MCF 10A (cell line): ENCODE measurements at regions of chr7 and their contacts with region 1.

Region 1: DNA sequence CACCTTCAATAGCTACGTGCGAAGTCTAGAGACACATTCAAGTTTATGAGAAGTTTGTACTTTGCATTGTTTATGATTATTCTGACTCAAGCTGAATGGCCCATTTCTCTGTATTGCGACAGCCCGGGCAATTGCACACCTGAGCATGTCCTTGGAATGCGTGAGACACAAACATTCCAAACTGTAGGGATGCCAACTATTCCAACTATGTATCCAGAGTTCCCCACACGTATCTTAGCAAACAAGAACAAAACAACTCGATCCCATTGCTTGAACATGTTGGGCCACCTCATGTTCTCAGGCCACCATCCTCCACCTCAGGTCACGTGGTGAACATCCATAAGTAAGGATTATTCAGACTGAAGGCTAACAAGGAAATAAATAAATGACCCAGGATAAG is 51.4 kb upstream of the EGFR start:
- DNase-seq: peak; percentile 93
- H3K4me3 Mint-ChIP-seq: peak overlapping the region; percentile 35
- H3K27ac Mint-ChIP-seq: peak overlapping the region; percentile 99
- H3K4me1 Mint-ChIP-seq: peaks cover 48% of the 10 kb centered on the region
- H3K27me3 Mint-ChIP-seq: no peaks in the 10 kb centered on the region
- CTCF ChIP-seq: no peak

Region 2: GRCh38 chr7:54788664-54789063 is 178.7 kb before region 1 on chr7:
- CTCF ChIA-PET with region 1: no interaction called
- POLR2A ChIA-PET with region 1: no interaction called
- intact Hi-C with region 1: loop called (anchors 1 kb)
- DNase-seq: peak; percentile 65
- H3K4me3 Mint-ChIP-seq: no peak overlapping the region
- H3K27ac Mint-ChIP-seq: peak overlapping the region; percentile 49
- H3K4me1 Mint-ChIP-seq: peaks cover 6% of the 10 kb centered on the region
- H3K27me3 Mint-ChIP-seq: no peaks in the 10 kb centered on the region
- CTCF ChIP-seq: peak; percentile 54

Region 3: DNA sequence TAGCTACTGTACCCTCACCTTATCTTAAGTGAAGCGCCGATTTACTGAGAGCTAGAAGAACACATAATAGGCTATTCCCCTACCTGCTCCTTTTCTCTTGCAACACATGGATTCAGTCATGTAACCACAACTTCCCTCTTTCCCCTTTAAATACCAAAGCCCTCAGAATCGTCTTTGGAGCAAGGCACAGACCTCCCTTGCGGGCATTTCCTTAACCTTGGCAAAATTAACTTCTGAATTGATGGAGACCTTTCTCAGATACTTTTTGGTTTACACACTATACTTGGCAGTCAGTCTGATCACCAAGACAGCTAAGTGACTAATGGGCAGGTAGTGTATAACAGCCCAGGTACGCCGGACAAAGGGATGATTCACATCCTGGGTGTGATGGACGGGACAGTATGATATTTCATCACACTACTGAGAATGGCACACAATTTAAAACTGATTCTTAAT is 135.7 kb before region 1 on chr7:
- CTCF ChIA-PET with region 1: no interaction called
- POLR2A ChIA-PET with region 1: interaction called, 16 read pairs
- intact Hi-C with region 1: no loop called
- DNase-seq: peak; percentile 96
- H3K4me3 Mint-ChIP-seq: peak overlapping the region; percentile 28
- H3K27ac Mint-ChIP-seq: peak overlapping the region; percentile 61
- H3K4me1 Mint-ChIP-seq: peaks cover 21% of the 10 kb centered on the region
- H3K27me3 Mint-ChIP-seq: no peaks in the 10 kb centered on the region
- CTCF ChIP-seq: no peak

Region 4: GRCh38 chr7:54839538-54840213 is 127.7 kb before region 1 on chr7:
- CTCF ChIA-PET with region 1: no interaction called
- POLR2A ChIA-PET with region 1: interaction called, 3 read pairs
- intact Hi-C with region 1: loop called (anchors 2 kb)
- DNase-seq: peak; percentile 81
- H3K4me3 Mint-ChIP-seq: no peak overlapping the region
- H3K27ac Mint-ChIP-seq: no peak overlapping the region
- H3K4me1 Mint-ChIP-seq: peaks cover 29% of the 10 kb centered on the region
- H3K27me3 Mint-ChIP-seq: no peaks in the 10 kb centered on the region
- CTCF ChIP-seq: peak; percentile 80

Region 5: GRCh38 chr7:54944179-54944578 is 23.2 kb before region 1 on chr7:
- CTCF ChIA-PET with region 1: interaction called, 3 read pairs
- POLR2A ChIA-PET with region 1: interaction called, 63 read pairs
- intact Hi-C with region 1: no loop called
- DNase-seq: peak; percentile 21
- H3K4me3 Mint-ChIP-seq: no peak overlapping the region
- H3K27ac Mint-ChIP-seq: peak overlapping the region; percentile 4
- H3K4me1 Mint-ChIP-seq: peaks cover 24% of the 10 kb centered on the region
- H3K27me3 Mint-ChIP-seq: no peaks in the 10 kb centered on the region
- CTCF ChIP-seq: no peak

Region 6: DNA sequence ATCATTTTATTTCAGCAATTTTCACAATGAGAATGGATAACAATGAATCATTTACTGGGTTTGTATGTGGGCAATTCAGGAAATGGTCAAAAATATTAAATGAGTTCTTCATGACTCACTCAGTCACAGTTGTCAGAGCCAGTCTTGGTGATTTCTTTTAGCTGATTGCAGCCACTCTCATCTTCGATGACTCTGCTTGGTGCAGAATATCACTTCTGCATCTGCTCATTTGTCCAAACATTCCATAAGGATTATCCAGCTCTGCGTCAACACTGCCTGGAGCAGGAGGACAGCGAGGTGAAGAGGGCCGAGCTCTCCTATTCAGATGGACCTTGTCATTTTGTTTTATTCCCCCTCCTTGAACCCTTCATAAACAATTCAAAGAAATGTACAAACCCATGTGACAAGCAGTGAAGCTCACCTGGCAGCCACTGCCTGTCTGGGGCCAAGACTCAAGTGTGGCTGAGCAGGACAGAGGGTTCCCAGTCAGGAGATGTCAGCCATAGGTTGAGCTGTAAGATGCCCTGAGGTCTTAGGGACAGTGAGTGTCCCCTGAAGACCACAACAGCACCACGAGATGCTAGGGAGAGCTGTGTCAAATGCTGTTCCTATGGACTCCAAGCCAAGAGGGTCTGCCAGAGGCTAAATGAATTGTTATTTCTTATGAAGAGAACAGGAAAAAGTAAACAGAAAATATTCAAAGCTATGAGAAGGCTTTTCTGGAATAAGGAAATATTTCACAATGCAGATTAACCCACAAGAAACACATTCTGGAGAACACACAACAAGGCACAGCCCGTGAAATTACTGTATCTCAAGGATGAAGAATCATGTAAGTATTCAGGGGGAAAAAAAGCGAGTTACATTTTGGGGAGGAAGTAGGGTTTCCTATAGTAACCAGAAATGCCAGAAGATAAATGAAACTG is 18.3 kb after region 1 on chr7:
- CTCF ChIA-PET with region 1: interaction called, 3 read pairs
- POLR2A ChIA-PET with region 1: interaction called, 24 read pairs
- intact Hi-C with region 1: no loop called
- DNase-seq: peak; percentile 81
- H3K4me3 Mint-ChIP-seq: peak overlapping the region; percentile 51
- H3K27ac Mint-ChIP-seq: peak overlapping the region; percentile 97
- H3K4me1 Mint-ChIP-seq: peaks cover 16% of the 10 kb centered on the region
- H3K27me3 Mint-ChIP-seq: no peaks in the 10 kb centered on the region
- CTCF ChIP-seq: no peak

Region 7: GRCh38 chr7:55048221-55048859 is 81.0 kb after region 1 on chr7:
- CTCF ChIA-PET with region 1: no interaction called
- POLR2A ChIA-PET with region 1: no interaction called
- intact Hi-C with region 1: no loop called
- DNase-seq: peak; percentile 86
- H3K4me3 Mint-ChIP-seq: no peak overlapping the region
- H3K27ac Mint-ChIP-seq: peak overlapping the region; percentile 49
- H3K4me1 Mint-ChIP-seq: peaks cover 66% of the 10 kb centered on the region
- H3K27me3 Mint-ChIP-seq: no peaks in the 10 kb centered on the region
- CTCF ChIP-seq: no peak

Region 8: GRCh38 chr7:55065079-55065478 is 97.7 kb after region 1 on chr7:
- CTCF ChIA-PET with region 1: no interaction called
- POLR2A ChIA-PET with region 1: interaction called, 15 read pairs
- intact Hi-C with region 1: loop called (anchors 5 kb)
- DNase-seq: peak; percentile 95
- H3K4me3 Mint-ChIP-seq: peak overlapping the region; percentile 63
- H3K27ac Mint-ChIP-seq: peak overlapping the region; percentile 93
- H3K4me1 Mint-ChIP-seq: peaks cover 81% of the 10 kb centered on the region
- H3K27me3 Mint-ChIP-seq: no peaks in the 10 kb centered on the region
- CTCF ChIP-seq: no peak